Right ventricle myocardium superior (tissue), 1 donor: ENCODE measurements at regions of chr7 and their contacts with region 1.

Region 1: DNA sequence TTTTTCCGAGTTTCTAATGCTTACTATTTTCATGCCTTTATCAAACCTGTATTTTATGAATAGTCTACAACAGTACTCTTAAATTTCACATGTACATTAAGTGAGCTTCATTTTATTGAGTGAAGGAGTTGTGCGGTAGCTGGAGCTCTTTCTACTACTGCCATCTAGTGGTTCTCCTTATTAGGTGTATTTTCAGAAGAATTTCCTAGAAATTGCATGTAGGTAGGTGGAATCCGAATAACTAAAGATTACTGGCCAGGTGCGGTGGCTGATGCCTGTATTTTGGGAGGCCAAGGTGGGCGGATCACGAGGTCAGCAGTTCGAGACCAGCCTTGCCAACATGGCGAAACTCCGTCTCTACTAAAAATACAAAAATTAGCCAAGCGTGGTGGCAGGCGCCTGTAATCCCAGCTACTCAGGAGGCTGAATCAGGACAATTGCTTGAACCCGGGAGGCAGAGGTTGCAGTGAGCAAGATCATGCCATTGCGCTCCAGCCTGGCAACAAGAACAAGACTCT is 38.3 kb downstream of the LRRC72 start:
- DNase-seq: no peak
- ATAC-seq: peak; percentile 74

Region 2: DNA sequence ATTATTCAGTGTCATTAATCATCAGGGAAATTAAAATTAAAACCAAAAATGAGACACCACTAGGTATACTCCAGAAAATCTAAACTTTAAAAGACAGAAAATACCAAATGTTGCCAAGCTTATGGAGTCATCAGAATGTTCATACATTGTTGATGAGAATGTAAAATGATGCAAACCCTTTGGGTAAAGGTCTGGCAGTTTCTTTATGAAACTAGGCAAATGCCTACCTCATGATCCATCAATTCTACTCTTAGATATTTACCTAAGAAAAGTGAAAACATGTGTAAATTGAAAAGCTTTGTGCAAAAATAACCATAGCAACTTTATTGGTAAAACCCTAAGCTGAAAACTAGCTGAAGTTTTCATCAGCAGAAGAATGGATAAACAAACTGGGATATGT is 549.0 kb before region 1 on chr7:
- intact Hi-C with region 1: no loop called
- DNase-seq: no peak
- ATAC-seq: no peak

Region 3: GRCh38 chr7:16078076-16078952 is 486.7 kb before region 1 on chr7:
- intact Hi-C with region 1: loop called (anchors 5 kb)
- DNase-seq: no peak
- ATAC-seq: peak; percentile 82

Region 4: DNA sequence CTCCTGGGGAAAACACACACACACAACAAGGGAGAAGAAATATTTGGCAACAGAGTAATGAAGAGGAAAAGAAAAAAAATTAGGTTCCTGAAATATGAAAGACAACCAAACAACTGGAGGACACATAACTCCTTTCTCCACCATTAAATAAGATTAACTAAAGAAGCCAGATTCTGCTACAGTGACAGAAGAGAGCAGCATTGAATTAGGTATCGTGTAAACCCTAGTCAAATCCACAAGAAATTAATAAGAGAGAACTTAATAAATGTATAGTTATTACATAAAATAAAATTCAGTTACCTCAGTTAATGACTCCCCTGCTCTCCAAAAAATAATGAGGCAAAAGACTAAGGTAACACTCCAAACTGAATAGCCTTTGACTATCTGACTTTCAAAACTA is 450.3 kb before region 1 on chr7:
- intact Hi-C with region 1: loop called (anchors 10 kb)
- DNase-seq: no peak
- ATAC-seq: no peak

Region 5: DNA sequence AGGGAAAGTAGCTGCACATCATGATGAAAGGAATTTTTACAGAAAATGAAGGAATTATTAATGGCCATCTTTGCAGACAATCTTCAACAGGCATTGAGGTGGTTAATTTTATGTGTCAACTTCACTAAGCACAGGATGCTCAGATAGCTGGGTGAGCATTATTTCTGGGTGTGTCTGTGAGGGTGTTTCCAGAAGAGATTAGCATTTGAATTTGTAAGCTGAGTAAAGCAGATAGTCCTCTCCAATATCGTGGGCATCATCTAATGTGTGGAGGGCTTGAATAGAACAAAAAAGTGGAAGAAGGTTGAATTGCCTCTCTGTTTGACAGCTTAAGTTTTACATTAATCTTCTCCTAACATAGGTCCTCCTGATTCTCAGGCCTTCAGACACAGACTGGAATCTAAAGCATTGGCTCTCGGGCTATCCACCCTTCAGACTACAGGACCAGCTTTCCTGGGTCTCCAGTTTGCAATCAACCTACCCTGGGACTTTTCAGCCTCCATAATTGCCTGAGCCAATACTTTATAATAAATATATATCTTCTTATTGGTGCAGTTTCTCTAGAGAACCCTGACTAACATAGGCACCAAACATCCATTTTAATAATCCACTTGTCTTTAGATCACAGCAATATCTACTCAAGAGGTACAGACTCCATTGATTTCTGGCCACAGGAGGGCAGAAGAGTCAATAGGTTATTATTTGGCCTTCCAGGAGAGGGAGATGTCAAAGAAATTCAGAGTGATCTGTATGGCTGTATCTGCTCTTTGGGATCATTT is 133.1 kb before region 1 on chr7:
- intact Hi-C with region 1: loop called (anchors 5 kb)
- DNase-seq: no peak
- ATAC-seq: peak; percentile 87